ENCODE measurements at regions of chr5 and their contacts with region 1.

Region 1: DNA sequence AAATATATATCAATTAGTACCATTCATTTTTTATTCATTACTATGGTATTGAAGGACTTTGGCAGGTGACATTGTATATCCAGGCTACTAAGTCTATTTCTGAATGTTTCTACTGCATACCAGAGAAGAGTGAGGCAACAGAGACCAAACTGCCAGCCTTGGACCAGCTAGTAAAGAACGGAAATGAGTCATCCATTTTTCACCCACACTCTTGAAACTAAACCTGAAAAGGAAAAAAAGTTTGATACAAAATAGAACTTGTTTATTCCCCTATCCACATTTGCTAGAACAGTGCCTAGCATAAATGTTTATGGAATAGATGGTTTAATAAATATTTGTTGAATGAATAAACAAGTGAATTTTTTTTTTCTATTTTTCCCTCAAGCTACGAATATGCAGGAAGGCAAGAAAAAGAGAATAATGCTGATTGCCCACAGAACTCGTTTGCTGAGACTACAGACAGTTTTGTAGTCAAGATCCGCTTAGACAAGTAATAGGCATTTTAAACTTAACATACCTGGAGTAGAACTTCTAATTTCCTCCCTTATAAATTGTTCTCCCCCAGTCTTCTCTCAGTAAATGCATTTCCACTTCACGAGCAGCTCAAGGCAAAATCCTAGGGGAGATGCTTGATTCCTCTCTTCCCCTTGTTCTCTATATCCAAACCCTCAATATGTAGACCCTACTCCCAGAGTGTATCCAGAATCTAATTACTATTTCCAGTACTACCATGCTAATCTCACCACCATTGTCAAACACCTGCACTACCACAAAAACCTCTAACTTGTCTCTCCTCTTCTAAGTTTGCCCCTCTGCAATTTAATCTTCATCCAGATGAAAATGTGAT is 146.2 kb upstream of the RASA1 start:
- DNase-seq: peak; percentile 71
- ATAC-seq: peak; percentile 79
- H3K4me3 ChIP-seq: peak overlapping the region in 1 of 2 experiments; percentile 31; a peak in 2 of 4 replicates
- H3K27ac ChIP-seq: peak overlapping the region; percentile 51; the same call in 1 of the 2 replicates
- H3K4me1 ChIP-seq: peaks cover 18 to 48% of the 10 kb centered on the region in 2 experiments
- H3K27me3 ChIP-seq: no peaks in the 10 kb centered on the region
- CTCF ChIP-seq: no peak
- POLR2A ChIP-seq: no peak
- RAD21 ChIP-seq: 0 out of 2 replicates have a peak, but pooled peaks have one; percentile 8

Region 2: GRCh38 chr5:87267574-87268125 is 146.1 kb after region 1 on chr5 and contains the start of gene RASA1:
- CTCF ChIA-PET with region 1: no interaction called
- POLR2A ChIA-PET with region 1: no interaction called
- RAD21 ChIA-PET with region 1: no interaction called
- intact Hi-C with region 1: loop called (anchors 5 kb)
- DNase-seq: peak; percentile 90
- ATAC-seq: peak; percentile 81
- H3K4me3 ChIP-seq: peak within 1 kb of the TSS; percentile 72 to 86
- H3K27ac ChIP-seq: peak within 1 kb of the TSS; percentile 90
- H3K4me1 ChIP-seq: peaks cover 5 to 16% of the 10 kb centered on the region in 2 experiments; a peak in 3 of 4 replicates
- H3K27me3 ChIP-seq: no peaks in the 10 kb centered on the region
- CTCF ChIP-seq: no peak
- POLR2A ChIP-seq: peak; percentile 68
- RAD21 ChIP-seq: peak; percentile 30; the same call in 1 of the 2 replicates
- total RNA-seq, gene RASA1: 23.9 TPM

Measured in HCT116 (cell line).